PC-9 (cell line): ENCODE measurements at regions of chr11 and their contacts with region 1.

Region 1: DNA sequence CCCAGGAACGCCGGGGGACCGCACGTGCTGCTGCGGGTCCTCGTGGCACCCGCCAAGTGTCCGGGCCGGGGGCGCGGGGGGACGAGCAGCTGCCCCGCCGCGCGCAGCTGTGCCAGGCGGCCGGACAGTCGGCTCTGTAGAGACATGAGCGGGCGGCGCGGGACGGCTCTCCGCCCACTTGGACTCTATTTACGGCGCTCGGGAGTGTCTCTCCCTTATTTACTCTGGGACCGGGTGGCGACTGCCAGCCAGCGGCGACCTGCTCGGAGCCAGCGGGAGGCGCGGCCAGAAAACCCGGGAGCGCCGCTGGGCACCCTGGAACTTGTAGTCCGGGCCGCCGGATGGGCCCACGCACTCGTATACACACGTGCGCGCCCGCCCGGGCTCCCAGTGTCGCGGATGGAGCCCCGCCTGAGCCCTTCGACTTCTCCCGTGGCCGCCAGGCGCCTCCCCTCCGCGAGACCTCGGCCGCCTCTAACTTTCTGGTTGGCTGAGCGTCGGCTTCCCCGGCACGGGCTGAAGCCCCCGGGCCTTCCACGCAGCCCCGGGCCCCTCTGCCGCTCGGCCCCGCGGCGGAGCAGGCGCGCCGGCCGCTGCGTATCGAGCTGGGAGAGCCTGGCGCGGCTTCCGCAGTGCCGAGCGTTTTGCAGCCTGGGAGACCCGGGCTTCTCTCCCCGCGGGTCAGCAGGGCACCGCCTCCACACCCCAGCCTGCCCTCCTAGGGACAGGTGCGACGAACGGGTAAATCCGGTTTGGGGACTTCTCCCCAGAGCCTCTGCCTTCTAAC is at the start of gene MACROD1:
- DNase-seq: peak; percentile 97 to 98
- H3K4me3 ChIP-seq: peak within 1 kb of the TSS; percentile 70
- H3K27ac ChIP-seq: peak within 1 kb of the TSS; percentile 74
- H3K4me1 ChIP-seq: peaks cover 22% of the 10 kb centered on the region
- H3K27me3 ChIP-seq: no peaks in the 10 kb centered on the region
- CTCF ChIP-seq: no peak
- total RNA-seq, gene MACROD1: 41.0 and 68.8 TPM in 2 replicates

Region 2: DNA sequence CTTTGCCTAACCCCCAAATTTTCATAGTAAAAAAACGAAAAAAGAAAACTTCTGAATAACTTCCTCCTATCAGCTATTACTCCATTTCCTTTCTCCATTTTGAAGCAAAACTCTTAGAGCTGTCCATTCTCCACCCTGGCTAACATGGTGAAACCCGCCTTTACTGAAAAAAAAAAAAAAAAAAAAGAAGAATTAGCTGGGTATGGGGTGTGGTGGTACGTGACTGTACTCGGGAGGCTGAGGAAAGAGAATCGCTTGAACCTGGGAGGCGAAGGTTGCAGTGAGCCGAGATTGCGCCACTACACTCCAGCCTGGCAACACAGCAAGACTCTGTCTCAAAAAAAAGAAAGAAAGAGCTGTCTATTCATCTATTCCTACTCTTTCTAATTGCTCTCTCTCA is 1349.5 kb before region 1 on chr11:
- CTCF ChIA-PET with region 1: interaction called, 15 read pairs
- POLR2A ChIA-PET with region 1: no interaction called
- intact Hi-C with region 1: no loop called
- DNase-seq: no peak
- H3K4me3 ChIP-seq: no peak overlapping the region
- H3K27ac ChIP-seq: no peak overlapping the region
- H3K4me1 ChIP-seq: no peaks in the 10 kb centered on the region
- H3K27me3 ChIP-seq: no peaks in the 10 kb centered on the region
- CTCF ChIP-seq: no peak

Region 3: DNA sequence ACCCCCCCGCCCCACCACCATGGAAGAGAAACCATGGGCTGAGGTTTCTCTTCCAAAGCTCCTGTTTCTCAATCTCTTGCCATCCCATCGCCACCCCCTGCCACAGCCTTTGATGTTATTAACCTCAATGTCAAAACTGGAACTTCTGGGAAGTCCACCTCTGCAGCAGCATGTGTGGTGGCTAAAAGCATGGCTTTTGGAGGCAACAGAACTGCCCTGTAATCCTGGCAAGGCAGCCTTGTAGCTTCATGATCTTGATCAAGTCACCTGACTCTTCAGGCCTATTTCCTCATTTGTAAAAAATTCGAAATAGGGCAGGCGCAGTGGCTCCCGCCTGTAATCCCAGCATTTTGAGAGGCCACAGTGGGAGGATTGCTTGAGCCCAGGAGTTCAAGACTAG is 195.1 kb before region 1 on chr11:
- CTCF ChIA-PET with region 1: no interaction called
- POLR2A ChIA-PET with region 1: no interaction called
- intact Hi-C with region 1: no loop called
- DNase-seq: no peak
- H3K4me3 ChIP-seq: no peak overlapping the region
- H3K27ac ChIP-seq: no peak overlapping the region
- H3K4me1 ChIP-seq: peaks cover 6% of the 10 kb centered on the region
- H3K27me3 ChIP-seq: no peaks in the 10 kb centered on the region
- CTCF ChIP-seq: no peak

Region 4: GRCh38 chr11:64185816-64186498 is 19.9 kb after region 1 on chr11 and contains the start of gene STIP1:
- CTCF ChIA-PET with region 1: interaction called, 3 read pairs
- POLR2A ChIA-PET with region 1: interaction called, 6 read pairs
- intact Hi-C with region 1: loop called (anchors 1 kb)
- DNase-seq: peak; percentile 100
- H3K4me3 ChIP-seq: peak within 1 kb of the TSS; percentile 64
- H3K27ac ChIP-seq: peak within 1 kb of the TSS; percentile 64
- H3K4me1 ChIP-seq: peaks cover 28% of the 10 kb centered on the region
- H3K27me3 ChIP-seq: no peaks in the 10 kb centered on the region
- CTCF ChIP-seq: peak; percentile 31; the same call in 1 of the 2 replicates
- total RNA-seq, gene STIP1: 267 and 299 TPM in 2 replicates